ENCODE measurements at regions of chr7 and their contacts with region 1.

Region 1: GRCh38 chr7:10939911-10940703 is 33.6 kb upstream of the PHF14 start:
- H3K4me3 Mint-ChIP-seq: no peak overlapping the region
- H3K27ac Mint-ChIP-seq: no peak overlapping the region
- H3K4me1 Mint-ChIP-seq: peaks cover 7% of the 10 kb centered on the region
- H3K27me3 Mint-ChIP-seq: no peaks in the 10 kb centered on the region

Region 2: DNA sequence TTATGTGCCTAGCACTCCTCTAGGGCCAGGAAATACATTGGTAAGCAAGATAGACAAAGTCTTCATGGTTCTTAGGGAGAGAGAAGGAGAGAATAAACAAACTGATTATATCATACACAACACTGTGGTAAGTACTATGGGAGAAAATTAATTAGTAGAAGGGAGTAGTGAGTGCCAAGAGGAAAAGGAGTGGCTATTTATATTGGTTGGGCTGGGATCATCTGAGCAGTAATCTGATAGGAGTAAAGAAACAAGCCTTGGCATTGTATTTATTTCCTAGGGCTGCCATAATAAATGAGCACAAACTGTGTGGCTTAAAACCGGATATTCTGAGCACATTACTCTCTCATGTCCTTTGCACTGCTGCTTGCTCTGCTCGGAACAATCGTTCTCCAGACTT is 124.6 kb before region 1 on chr7:
- intact Hi-C with region 1: no loop called
- H3K4me3 Mint-ChIP-seq: no peak overlapping the region
- H3K27ac Mint-ChIP-seq: no peak overlapping the region
- H3K4me1 Mint-ChIP-seq: no peaks in the 10 kb centered on the region
- H3K27me3 Mint-ChIP-seq: no peaks in the 10 kb centered on the region

Region 3: DNA sequence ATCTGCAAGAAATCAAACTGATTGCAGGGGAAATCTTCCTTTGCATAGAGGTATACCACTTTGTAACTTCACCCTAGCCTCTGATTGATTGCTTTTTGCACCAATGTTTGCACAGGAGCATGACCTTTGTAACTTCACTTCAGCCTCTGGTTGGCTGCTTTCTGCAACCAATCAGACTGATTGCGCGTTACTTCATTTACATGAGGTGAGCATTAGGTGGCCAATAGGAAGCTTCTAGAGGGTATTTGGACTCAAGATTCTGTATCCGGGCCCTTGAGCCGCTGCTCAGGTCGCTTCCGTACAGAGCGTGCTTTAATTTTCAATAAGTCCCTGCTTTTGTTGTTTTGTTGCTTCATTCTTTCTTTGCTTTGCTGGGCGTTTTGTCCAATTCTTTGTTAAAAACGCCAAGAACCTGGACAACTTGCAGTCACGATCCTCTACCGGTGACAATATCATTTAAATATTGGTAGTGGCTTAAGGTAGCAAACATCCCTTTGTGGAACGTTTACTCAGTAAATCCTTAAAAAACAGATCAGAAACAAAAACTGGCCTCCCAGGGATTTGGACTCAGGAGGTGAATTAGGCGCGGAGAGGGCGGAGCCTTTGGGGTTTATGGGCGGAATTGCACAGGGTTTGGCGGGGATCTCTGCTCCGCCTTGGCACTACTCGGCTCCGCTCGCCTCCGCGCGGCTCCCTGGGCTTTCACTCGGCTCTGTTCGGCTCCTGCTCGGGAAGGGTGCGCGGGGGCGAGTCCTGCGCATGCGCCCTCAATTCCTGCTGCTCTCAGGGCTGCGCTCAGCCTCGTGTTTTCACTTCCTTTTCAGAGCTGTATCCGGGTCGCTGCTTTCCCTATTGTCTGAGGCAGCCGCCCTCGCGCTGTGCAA is 33.2 kb after region 1 on chr7 and contains the start of gene PHF14:
- intact Hi-C with region 1: loop called (anchors 1 kb)
- H3K4me3 Mint-ChIP-seq: peak within 1 kb of the TSS; percentile 85
- H3K27ac Mint-ChIP-seq: peak within 1 kb of the TSS; percentile 85
- H3K4me1 Mint-ChIP-seq: peaks cover 9% of the 10 kb centered on the region
- H3K27me3 Mint-ChIP-seq: no peaks in the 10 kb centered on the region